ENCODE measurements at regions of chr12 and their contacts with region 1.

Region 1: DNA sequence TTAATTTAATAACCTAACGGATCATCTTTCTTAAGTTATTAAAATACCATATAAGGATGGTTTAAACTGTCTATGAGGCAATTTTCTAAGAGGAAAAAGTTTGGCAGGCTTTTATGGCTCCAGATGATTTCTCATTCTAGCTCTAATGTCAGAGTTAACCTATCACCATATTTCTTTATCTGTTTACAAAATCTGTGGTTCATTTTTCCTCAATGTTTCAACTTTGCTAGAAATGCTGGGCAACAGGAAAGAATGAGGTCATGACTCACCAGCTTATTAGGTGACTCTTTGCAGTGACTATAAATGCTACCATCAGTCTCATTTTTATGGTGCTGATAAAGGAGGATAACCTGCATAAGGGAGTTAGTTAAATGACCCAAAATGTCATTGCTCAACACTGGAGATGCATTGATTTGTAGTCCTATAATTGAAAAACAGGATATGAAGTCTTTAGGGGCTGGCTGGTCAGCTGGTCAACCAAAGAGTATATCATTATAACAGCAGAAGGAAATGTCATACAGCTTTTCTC is 45.3 kb upstream of the RAP1B start:
- DNase-seq: no peak
- H3K4me3 Mint-ChIP-seq: no peak overlapping the region
- H3K27ac Mint-ChIP-seq: peak overlapping the region; percentile 48
- H3K4me1 Mint-ChIP-seq: peaks cover 27% of the 10 kb centered on the region
- H3K27me3 Mint-ChIP-seq: no peaks in the 10 kb centered on the region

Region 2: GRCh38 chr12:68012712-68013111 is 552.7 kb before region 1 on chr12:
- intact Hi-C with region 1: no loop called
- DNase-seq: no peak
- H3K4me3 Mint-ChIP-seq: no peak overlapping the region
- H3K27ac Mint-ChIP-seq: no peak overlapping the region
- H3K4me1 Mint-ChIP-seq: peaks cover 1% of the 10 kb centered on the region
- H3K27me3 Mint-ChIP-seq: no peaks in the 10 kb centered on the region

Region 3: GRCh38 chr12:68497702-68498101 is 67.7 kb before region 1 on chr12:
- intact Hi-C with region 1: loop called (anchors 2 kb)
- DNase-seq: no peak
- H3K4me3 Mint-ChIP-seq: peak overlapping the region; percentile 51
- H3K27ac Mint-ChIP-seq: peak overlapping the region; percentile 86
- H3K4me1 Mint-ChIP-seq: peaks cover 33% of the 10 kb centered on the region
- H3K27me3 Mint-ChIP-seq: peaks cover 3% of the 10 kb centered on the region

Region 4: GRCh38 chr12:68538726-68539614 is 26.5 kb before region 1 on chr12:
- intact Hi-C with region 1: loop called (anchors 2 kb)
- DNase-seq: peak; percentile 62
- H3K4me3 Mint-ChIP-seq: no peak overlapping the region
- H3K27ac Mint-ChIP-seq: peak overlapping the region; percentile 42
- H3K4me1 Mint-ChIP-seq: peaks cover 32% of the 10 kb centered on the region
- H3K27me3 Mint-ChIP-seq: no peaks in the 10 kb centered on the region

Region 5: GRCh38 chr12:68587448-68587873 is 22.0 kb after region 1 on chr12:
- intact Hi-C with region 1: loop called (anchors 1 kb)
- DNase-seq: peak; percentile 40
- H3K4me3 Mint-ChIP-seq: no peak overlapping the region
- H3K27ac Mint-ChIP-seq: peak overlapping the region; percentile 76
- H3K4me1 Mint-ChIP-seq: peaks cover 27% of the 10 kb centered on the region
- H3K27me3 Mint-ChIP-seq: no peaks in the 10 kb centered on the region

Region 6: GRCh38 chr12:68772714-68773113 is 207.3 kb after region 1 on chr12:
- intact Hi-C with region 1: no loop called
- DNase-seq: no peak
- H3K4me3 Mint-ChIP-seq: peak overlapping the region; percentile 40
- H3K27ac Mint-ChIP-seq: no peak overlapping the region
- H3K4me1 Mint-ChIP-seq: peaks cover 4% of the 10 kb centered on the region
- H3K27me3 Mint-ChIP-seq: no peaks in the 10 kb centered on the region

Measured in activated T-helper 2 cell treated with anti-CD3 and anti-CD28 coated beads, Interferon-gamma antibody, Interleukin-2, Interleukin-4, amounts not matched to agents 10 μg/mL and 5 μg/mL and 100 μg/mL, durations not matched to agents 14 hours and 24 hours and 36 hours (primary cell).